Activated CD8-positive, alpha-beta T cell treated with anti-CD3 and anti-CD28 coated beads for 36 hours (primary cell): ENCODE measurements at regions of chr16 and their contacts with region 1.

Region 1: DNA sequence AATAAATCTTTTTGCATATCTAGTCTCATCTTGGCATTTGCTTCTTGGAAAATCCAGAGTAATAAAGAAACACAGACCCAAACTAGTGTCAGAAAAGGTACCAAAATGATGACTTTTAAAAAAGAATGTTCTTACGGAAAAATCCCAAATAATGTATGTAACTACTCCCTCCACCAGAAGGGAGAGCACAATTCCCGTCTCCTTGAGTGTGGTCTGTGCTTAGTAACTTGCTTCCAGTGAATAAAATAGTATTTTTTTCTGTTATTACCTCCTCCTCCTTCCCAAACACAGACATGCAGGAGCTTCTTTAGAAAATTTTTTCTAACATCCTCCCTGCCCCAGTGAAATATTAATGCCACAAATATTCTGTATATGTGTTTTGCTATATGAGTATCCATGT is 358.1 kb downstream of the ZFHX3 start:
- DNase-seq: no peak
- ATAC-seq: no peak
- H3K4me3 Mint-ChIP-seq: no peak overlapping the region
- H3K27ac Mint-ChIP-seq: no peak overlapping the region
- H3K4me1 Mint-ChIP-seq: no peaks in the 10 kb centered on the region
- H3K27me3 Mint-ChIP-seq: no peaks in the 10 kb centered on the region
- CTCF ChIP-seq: no peak

Region 2: DNA sequence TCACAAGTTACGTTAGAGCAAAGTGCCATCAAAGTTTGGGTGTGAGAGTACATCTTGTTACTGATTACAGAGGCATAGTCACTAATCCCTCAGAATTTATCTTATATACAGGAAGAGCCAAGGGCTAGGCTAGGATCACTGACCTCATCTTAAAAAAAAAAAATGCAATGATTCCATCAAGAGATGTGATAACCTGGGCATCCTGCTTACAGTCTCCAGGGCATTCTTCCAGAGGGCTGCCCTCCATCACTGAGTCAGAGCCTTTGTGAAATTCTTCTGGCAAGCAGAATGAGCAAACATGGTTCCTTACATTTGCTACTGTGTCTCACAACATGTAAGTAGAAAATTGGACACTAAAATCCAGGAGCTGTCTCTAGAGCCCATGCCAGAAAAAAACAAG is 52.5 kb before region 1 on chr16:
- CTCF ChIA-PET with region 1: no interaction called
- POLR2A ChIA-PET with region 1: no interaction called
- intact Hi-C with region 1: no loop called
- DNase-seq: no peak
- ATAC-seq: no peak
- H3K4me3 Mint-ChIP-seq: no peak overlapping the region
- H3K27ac Mint-ChIP-seq: no peak overlapping the region
- H3K4me1 Mint-ChIP-seq: peaks cover 3% of the 10 kb centered on the region
- H3K27me3 Mint-ChIP-seq: no peaks in the 10 kb centered on the region
- CTCF ChIP-seq: no peak

Region 3: DNA sequence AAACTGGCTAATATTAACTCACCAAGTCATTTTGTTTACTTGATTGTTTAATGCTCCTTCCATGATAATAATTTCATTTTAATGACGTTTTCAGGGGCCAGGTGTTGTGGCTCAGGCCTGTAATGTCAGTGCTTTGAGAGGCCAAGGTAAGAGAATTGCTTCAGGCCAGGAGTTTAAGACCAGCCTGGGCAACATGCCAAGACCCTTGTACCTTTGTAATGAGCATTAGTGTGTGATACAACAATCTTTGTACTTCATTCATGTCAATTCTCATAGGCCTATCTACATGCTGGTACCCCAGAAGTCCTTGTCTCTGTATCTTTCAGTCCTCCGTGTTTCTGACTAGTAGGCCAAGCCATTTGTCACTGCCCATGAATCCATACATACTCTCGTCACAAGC is 61.2 kb after region 1 on chr16:
- CTCF ChIA-PET with region 1: no interaction called
- POLR2A ChIA-PET with region 1: no interaction called
- intact Hi-C with region 1: loop called (anchors 10 kb)
- DNase-seq: no peak
- ATAC-seq: no peak
- H3K4me3 Mint-ChIP-seq: no peak overlapping the region
- H3K27ac Mint-ChIP-seq: no peak overlapping the region
- H3K4me1 Mint-ChIP-seq: no peaks in the 10 kb centered on the region
- H3K27me3 Mint-ChIP-seq: no peaks in the 10 kb centered on the region
- CTCF ChIP-seq: no peak

Region 4: DNA sequence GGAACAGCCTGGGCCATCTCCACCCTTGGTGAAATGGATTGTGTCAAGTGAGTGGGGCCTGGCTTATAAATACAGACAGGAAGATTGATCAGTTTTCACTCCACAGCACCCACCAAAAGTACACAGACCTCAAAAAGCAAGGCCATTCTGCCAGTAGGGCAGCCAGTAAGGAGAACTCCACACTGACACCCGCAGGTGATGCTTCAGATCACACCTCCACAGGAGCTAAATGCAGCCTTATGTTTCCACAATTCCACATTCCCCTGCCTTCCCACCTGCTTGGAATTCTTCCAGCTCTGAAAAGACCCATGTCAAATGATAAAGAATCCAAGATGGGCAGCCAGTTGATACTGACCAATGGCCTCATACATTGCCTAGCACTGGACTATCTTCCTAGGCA is 166.9 kb after region 1 on chr16:
- CTCF ChIA-PET with region 1: no interaction called
- POLR2A ChIA-PET with region 1: no interaction called
- intact Hi-C with region 1: no loop called
- DNase-seq: peak; percentile 50
- ATAC-seq: peak; percentile 51
- H3K4me3 Mint-ChIP-seq: no peak overlapping the region
- H3K27ac Mint-ChIP-seq: no peak overlapping the region
- H3K4me1 Mint-ChIP-seq: no peaks in the 10 kb centered on the region
- H3K27me3 Mint-ChIP-seq: peaks cover 2% of the 10 kb centered on the region
- CTCF ChIP-seq: peak; percentile 48